Aorta (tissue), 5 donors: ENCODE measurements at regions of chr11 and their contacts with region 1.

Region 1: DNA sequence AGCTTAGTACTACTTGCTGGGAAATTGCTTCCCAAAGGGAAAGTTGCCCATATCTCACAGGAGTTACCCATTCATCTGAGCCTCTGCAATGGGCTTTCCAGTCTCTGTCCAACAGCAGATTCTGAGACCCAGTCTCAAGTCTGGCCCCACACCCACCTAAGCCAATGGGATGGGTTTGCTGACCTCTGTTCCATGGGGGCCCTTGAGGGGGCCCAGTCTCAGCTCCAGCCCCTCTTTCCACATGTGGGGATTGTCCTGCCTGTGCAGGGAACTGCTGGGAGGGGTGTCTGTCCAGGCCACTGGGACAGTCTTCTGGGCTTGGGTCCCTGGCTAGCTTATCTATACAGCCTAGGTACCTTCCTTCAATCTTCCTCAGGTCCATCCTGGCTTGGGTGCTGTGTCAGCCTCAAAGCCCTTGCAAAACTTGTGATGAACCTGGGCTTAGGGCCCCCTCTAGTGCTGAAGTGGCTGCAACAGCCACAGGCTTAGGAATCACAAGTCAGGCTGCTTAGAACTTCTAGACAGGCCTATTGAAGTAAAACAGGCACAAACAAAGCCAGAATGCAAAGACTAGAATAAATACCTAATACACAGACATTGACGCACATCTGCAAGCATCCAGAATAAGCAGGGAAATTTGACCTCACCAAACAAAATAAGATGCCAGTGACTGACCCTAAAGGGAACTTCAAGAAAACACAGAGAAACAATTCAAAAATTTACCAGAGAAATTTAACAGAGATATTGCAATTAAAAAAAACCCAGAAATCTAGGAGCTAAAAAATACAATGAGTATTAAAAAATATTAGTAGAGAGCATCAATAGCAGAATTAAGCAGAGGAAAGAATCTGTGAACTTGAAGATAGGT is 11.7 kb upstream of the PATL1 start:
- DNase-seq: peak in 1 of 2 donors; percentile 75
- ATAC-seq: peak; percentile 82
- H3K4me3 ChIP-seq: no peak overlapping the region
- H3K27ac ChIP-seq: no peak overlapping the region
- H3K4me1 ChIP-seq: no peaks in the 10 kb centered on the region
- H3K27me3 ChIP-seq: no peaks in the 10 kb centered on the region

Region 2: GRCh38 chr11:59534676-59535075 is 145.8 kb before region 1 on chr11:
- intact Hi-C with region 1: loop called in 1 of 2 experiments (anchors 5 kb)
- DNase-seq: no peak
- ATAC-seq: no peak
- H3K4me3 ChIP-seq: no peak overlapping the region
- H3K27ac ChIP-seq: no peak overlapping the region
- H3K4me1 ChIP-seq: no peaks in the 10 kb centered on the region
- H3K27me3 ChIP-seq: no peaks in the 10 kb centered on the region

Region 3: GRCh38 chr11:59542142-59542810 is 138.2 kb before region 1 on chr11:
- intact Hi-C with region 1: loop called (anchors 5 kb)
- DNase-seq: no peak
- ATAC-seq: no peak
- H3K4me3 ChIP-seq: no peak overlapping the region
- H3K27ac ChIP-seq: no peak overlapping the region
- H3K4me1 ChIP-seq: no peaks in the 10 kb centered on the region
- H3K27me3 ChIP-seq: no peaks in the 10 kb centered on the region